ENCODE measurements at regions of chr10 and their contacts with region 1.

Region 1: GRCh38 chr10:117635826-117636225 is 93.3 kb downstream of the EMX2 start:
- DNase-seq: no peak
- H3K4me3 Mint-ChIP-seq: no peak overlapping the region
- H3K27ac Mint-ChIP-seq: no peak overlapping the region
- H3K4me1 Mint-ChIP-seq: no peaks in the 10 kb centered on the region
- H3K27me3 Mint-ChIP-seq: peaks cover 37% of the 10 kb centered on the region

Region 2: GRCh38 chr10:117677890-117678500 is 42.2 kb after region 1 on chr10:
- intact Hi-C with region 1: loop called (anchors 5 kb)
- DNase-seq: no peak
- H3K4me3 Mint-ChIP-seq: no peak overlapping the region
- H3K27ac Mint-ChIP-seq: no peak overlapping the region
- H3K4me1 Mint-ChIP-seq: peaks cover 8% of the 10 kb centered on the region
- H3K27me3 Mint-ChIP-seq: peaks cover 13% of the 10 kb centered on the region

Region 3: GRCh38 chr10:117710181-117710798 is 74.5 kb after region 1 on chr10:
- intact Hi-C with region 1: no loop called
- DNase-seq: no peak
- H3K4me3 Mint-ChIP-seq: no peak overlapping the region
- H3K27ac Mint-ChIP-seq: no peak overlapping the region
- H3K4me1 Mint-ChIP-seq: no peaks in the 10 kb centered on the region
- H3K27me3 Mint-ChIP-seq: peaks cover 9% of the 10 kb centered on the region

Measured in activated T-helper 1 cell treated with anti-CD3 and anti-CD28 coated beads, Interleukin-12 subunit alpha, Interleukin-12 subunit beta, Interleukin-2, Interleukin-4 antibody, amounts not matched to agents 30 ng/mL and 10 ng/mL and 1 ng/mL, durations not matched to agents 14 hours and 24 hours and 36 hours (primary cell).